Activated T-helper 1 cell treated with anti-CD3 and anti-CD28 coated beads, Interleukin-12 subunit alpha, Interleukin-12 subunit beta, Interleukin-2, Interleukin-4 antibody, amounts not matched to agents 30 ng/mL and 10 ng/mL and 1 ng/mL, durations not matched to agents 14 hours and 24 hours and 36 hours (primary cell): ENCODE measurements at regions of chr2 and their contacts with region 1.

Region 1: GRCh38 chr2:105915005-105915558 is 170.4 kb downstream of the NCK2 start:
- DNase-seq: no peak
- H3K4me3 Mint-ChIP-seq: no peak overlapping the region
- H3K27ac Mint-ChIP-seq: no peak overlapping the region
- H3K4me1 Mint-ChIP-seq: peaks cover 39% of the 10 kb centered on the region
- H3K27me3 Mint-ChIP-seq: no peaks in the 10 kb centered on the region

Region 2: DNA sequence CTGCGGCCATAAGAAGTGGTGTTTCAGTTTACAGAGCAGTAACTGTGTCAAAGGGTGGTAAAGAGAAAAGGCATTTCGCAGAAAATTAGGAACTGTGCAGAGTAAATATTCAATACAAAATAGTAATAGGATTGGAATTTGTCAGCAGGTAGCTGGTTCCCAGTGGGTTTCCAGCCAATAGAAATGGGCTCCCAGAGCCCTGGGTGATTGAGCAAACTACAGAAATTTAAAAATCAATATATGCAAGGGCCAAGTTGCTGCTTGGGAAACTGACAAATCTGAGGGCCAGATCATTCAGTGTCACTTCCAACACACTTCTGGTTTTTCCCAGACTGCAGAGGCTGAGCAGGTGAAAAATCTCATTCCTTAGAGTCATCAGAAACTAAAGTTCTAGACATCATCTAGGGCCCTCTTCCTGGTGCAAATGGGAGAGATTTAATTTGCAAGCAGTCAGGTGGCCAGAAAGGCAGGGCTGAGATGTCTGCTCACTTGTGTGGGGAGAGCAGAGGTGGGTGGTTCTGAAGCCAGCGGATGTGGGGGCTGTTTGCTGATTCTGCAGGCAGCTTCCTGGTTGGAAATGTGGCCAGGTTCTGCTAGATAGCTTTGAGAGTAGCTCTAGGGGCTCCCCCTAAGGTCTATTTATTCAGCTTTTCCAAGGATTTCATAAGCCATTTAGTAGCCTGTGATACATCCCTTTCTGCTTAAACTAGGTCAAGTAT is 12.0 kb after region 1 on chr2:
- intact Hi-C with region 1: loop called (anchors 2 kb)
- DNase-seq: peak; percentile 49
- H3K4me3 Mint-ChIP-seq: peak overlapping the region; percentile 23
- H3K27ac Mint-ChIP-seq: peak overlapping the region; percentile 85
- H3K4me1 Mint-ChIP-seq: peaks cover 44% of the 10 kb centered on the region
- H3K27me3 Mint-ChIP-seq: no peaks in the 10 kb centered on the region

Region 3: GRCh38 chr2:105934467-105934866 is 19.4 kb after region 1 on chr2:
- intact Hi-C with region 1: loop called (anchors 2 kb)
- DNase-seq: peak; percentile 41
- H3K4me3 Mint-ChIP-seq: peak overlapping the region; percentile 22
- H3K27ac Mint-ChIP-seq: peak overlapping the region; percentile 19
- H3K4me1 Mint-ChIP-seq: peaks cover 13% of the 10 kb centered on the region
- H3K27me3 Mint-ChIP-seq: no peaks in the 10 kb centered on the region

Region 4: DNA sequence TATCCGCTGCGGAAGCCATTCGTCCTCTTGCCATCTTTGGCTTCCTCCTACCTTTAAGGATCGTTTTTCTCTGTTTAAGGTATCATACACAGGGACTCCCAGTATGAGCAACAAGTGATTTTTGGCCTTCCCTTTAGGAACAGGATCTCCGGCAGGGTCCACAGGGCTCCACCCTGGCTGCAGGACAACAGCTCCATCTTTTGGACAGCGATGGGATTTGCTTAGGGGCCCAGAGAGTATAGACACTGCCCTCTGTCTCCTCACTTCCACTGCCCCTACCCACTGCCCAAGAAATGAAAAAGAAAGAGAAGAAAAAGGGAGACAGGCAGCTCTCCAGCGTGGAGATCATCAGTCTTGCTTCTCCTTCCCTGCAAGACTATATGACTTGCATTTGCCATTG is 54.5 kb after region 1 on chr2:
- intact Hi-C with region 1: no loop called
- DNase-seq: no peak
- H3K4me3 Mint-ChIP-seq: no peak overlapping the region
- H3K27ac Mint-ChIP-seq: no peak overlapping the region
- H3K4me1 Mint-ChIP-seq: no peaks in the 10 kb centered on the region
- H3K27me3 Mint-ChIP-seq: no peaks in the 10 kb centered on the region